Activated CD8-positive, alpha-beta T cell treated with anti-CD3 and anti-CD28 coated beads for 36 hours (primary cell): ENCODE measurements at regions of chr1 and their contacts with region 1.

Region 1: GRCh38 chr1:87045761-87046304 is 131.4 kb downstream of the HS2ST1 start:
- DNase-seq: peak; percentile 80
- ATAC-seq: peak; percentile 74
- H3K4me3 Mint-ChIP-seq: peak overlapping the region; percentile 46
- H3K27ac Mint-ChIP-seq: peak overlapping the region; percentile 82
- H3K4me1 Mint-ChIP-seq: peaks cover 52% of the 10 kb centered on the region
- H3K27me3 Mint-ChIP-seq: no peaks in the 10 kb centered on the region
- CTCF ChIP-seq: no peak

Region 2: DNA sequence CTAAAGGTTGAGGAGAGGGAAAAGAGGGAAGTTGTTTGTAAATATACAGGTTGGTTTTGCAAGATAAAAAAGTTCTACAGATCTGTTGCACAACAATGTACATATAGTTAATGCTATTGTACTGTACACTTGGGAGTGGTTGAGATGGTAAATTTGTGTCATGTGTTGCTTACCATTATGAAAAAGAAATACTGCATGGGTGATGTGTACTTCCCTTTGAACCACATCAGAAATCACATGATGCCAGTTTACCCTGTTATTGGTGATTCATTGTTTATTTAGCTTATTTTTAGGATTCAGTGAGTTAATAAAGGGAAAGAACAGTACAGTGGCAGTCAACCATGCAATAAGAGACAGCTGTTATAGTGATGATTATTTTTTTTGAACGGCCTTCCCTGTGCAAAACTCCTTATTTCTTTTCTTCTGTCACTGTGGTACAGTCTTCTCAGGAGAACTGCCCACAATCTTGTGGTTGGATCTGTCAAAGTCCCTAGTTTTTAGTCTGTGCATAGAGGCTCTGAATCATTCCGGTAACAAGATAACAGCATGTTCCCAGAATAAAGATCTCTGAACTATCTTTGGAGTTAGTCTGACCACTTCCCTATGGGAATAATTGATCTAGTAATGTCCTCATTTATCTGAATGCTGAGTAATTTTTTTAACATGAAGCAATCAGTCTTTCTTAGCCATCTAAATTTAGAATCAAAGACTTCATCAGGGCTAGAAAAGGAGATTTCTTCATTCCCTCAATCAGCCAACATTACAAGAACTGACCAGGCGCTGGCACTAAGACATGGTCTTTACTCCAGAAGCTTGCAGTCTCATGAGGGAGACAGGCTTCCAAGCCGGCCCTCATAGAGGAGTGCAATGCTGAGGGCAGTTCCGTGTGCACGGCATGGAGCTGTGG is 257.3 kb before region 1 on chr1:
- CTCF ChIA-PET with region 1: no interaction called
- POLR2A ChIA-PET with region 1: no interaction called
- intact Hi-C with region 1: no loop called
- DNase-seq: no peak
- ATAC-seq: no peak
- H3K4me3 Mint-ChIP-seq: no peak overlapping the region
- H3K27ac Mint-ChIP-seq: no peak overlapping the region
- H3K4me1 Mint-ChIP-seq: no peaks in the 10 kb centered on the region
- H3K27me3 Mint-ChIP-seq: peaks cover 1% of the 10 kb centered on the region
- CTCF ChIP-seq: no peak

Region 3: DNA sequence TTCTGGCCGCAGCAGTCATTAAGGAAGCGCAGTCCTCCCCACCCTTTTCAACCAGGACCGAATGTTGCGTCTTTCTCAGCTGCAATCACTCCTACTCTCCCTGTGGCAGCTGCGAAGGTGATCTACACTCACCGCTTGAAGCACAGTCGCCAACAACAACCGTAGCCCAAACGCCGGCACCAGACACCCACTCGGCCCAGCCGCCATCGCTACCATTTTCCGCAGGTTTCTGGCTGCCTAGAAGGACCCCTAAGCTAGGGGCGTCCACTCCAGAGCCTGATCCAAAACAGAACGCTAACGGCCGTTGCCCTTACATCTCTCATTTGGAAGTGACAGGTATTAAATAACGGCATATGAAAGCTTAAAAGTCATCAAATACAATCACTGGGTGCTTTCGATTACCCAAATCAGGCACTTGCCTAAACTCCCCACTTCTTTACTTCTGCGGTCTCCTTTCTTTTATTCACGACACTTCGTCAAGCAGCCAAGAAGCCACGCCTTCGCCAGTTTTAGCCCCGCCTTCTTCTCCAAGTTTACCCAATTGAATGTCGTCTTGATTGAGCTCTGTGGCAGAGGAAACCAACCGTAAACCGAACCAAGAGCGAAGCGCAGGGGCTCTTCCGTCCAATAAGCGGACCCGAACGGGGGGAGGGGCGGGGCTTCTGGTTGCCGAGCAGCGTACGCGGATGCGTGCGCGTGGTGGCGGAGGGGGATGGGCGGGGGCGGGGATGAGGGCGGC is 131.8 kb before region 1 on chr1 and contains the start of gene SELENOF:
- CTCF ChIA-PET with region 1: interaction called, 3 read pairs
- POLR2A ChIA-PET with region 1: interaction called, 25 read pairs
- intact Hi-C with region 1: loop called (anchors 10 kb)
- DNase-seq: peak; percentile 100
- ATAC-seq: peak; percentile 92
- H3K4me3 Mint-ChIP-seq: no peak within 1 kb of the TSS
- H3K27ac Mint-ChIP-seq: no peak within 1 kb of the TSS
- H3K4me1 Mint-ChIP-seq: peaks cover 42% of the 10 kb centered on the region
- H3K27me3 Mint-ChIP-seq: no peaks in the 10 kb centered on the region
- CTCF ChIP-seq: no peak
- total RNA-seq, gene SELENOF: 115 to 131 TPM